Activated CD4-positive, alpha-beta T cell treated with anti-CD3 and anti-CD28 coated beads, Interleukin-2, amount 10 ng/mL, durations not matched to agents 24 days and 14 days (primary cell): ENCODE measurements at regions of chr13 and their contacts with region 1.

Region 1: DNA sequence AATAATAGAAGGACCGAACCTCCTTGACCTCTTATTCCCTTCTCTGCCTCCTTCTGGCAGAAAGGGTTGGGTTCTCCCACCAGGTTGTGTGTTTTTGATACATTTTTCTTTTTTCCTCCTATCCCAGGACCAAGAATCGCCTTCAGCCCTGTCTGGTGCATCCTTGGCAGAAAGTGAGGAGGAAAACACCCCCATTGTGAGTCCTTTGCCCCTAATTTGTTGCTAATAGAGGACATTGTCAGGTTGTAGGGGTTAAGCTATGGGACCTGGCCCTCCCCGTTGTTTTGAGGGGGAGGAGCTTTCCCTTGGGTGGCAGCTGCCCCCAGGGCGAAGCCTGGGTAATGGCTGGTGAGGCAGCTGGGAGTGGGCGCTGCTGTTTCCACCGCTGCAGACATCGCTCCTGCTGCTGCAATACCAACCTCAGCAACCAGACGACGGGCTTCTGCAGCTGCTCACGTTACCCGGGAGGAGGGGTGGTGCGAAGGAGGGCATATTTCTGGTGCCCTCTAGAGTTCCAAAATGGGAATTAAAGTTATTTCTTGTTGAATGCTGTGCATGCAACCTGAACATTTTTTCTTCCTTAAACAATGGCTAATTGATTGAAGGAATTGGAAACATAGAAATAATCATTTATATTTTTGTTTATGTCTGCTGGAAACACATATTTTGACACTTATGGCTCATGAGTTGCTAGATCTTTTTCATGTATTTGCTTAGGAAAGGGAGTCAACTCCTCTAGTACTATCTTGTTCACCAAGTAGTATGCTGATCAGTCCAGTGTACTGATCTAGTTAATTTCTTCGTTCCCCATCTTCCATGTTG is 1.5 kb downstream of the ZMYM2 start:
- DNase-seq: peak; percentile 94
- H3K4me3 Mint-ChIP-seq: peak overlapping the region; percentile 97
- H3K27ac Mint-ChIP-seq: peak overlapping the region; percentile 97
- H3K4me1 Mint-ChIP-seq: peaks cover 25% of the 10 kb centered on the region
- H3K27me3 Mint-ChIP-seq: peaks cover 7% of the 10 kb centered on the region

Region 2: DNA sequence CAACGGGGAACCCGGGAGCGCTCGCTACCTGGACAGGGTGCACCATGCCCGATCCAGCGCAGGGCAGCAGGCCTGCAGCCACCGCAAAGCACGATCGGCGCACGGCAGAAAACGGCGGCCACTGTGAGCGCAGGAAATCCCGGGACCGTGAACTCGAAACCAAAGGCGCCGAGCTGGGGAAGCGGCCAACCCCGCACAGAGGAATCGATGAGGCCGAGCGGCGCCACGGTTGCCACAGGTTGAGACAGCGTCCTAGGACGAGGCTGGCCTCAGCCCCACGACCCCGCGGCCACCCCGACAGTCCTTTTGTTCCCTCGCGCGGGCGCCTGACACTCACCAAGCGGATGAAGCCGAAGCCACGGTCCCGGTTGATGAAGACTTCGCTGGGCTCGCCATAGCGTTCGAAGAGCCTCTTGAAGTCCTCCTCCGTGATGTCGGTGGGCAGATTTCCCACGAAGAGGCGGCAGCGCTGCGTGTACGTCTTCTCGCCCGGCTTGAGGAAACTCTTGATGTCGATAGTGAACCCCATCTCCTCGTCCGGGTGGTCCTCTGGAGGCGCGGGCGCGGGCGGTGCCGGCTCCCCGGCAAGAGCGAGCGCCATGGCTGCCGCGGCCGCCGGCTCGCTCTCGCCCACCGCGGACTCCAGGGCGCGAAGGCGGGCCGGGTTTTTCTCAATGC is 177.9 kb before region 1 on chr13:
- intact Hi-C with region 1: loop called (anchors 2 kb)
- DNase-seq: peak; percentile 91
- H3K4me3 Mint-ChIP-seq: peak overlapping the region; percentile 96
- H3K27ac Mint-ChIP-seq: peak overlapping the region; percentile 99
- H3K4me1 Mint-ChIP-seq: peaks cover 6% of the 10 kb centered on the region
- H3K27me3 Mint-ChIP-seq: peaks cover 2% of the 10 kb centered on the region

Region 3: GRCh38 chr13:20006206-20006605 is 46.2 kb after region 1 on chr13:
- intact Hi-C with region 1: loop called (anchors 5 kb)
- DNase-seq: no peak
- H3K4me3 Mint-ChIP-seq: no peak overlapping the region
- H3K27ac Mint-ChIP-seq: no peak overlapping the region
- H3K4me1 Mint-ChIP-seq: peaks cover 7% of the 10 kb centered on the region
- H3K27me3 Mint-ChIP-seq: no peaks in the 10 kb centered on the region

Region 4: GRCh38 chr13:20160847-20161274 is 200.8 kb after region 1 on chr13 and contains the start of gene GJA3:
- intact Hi-C with region 1: loop called (anchors 1 kb)
- DNase-seq: peak; percentile 86
- H3K4me3 Mint-ChIP-seq: peak within 1 kb of the TSS; percentile 86
- H3K27ac Mint-ChIP-seq: peak within 1 kb of the TSS; percentile 79
- H3K4me1 Mint-ChIP-seq: peaks cover 18% of the 10 kb centered on the region
- H3K27me3 Mint-ChIP-seq: peaks cover 56% of the 10 kb centered on the region
- total RNA-seq, gene GJA3: 0.02 TPM in 1 of 2 replicates, not detected in the other